ENCODE measurements at regions of chr17 and their contacts with region 1.

Region 1: DNA sequence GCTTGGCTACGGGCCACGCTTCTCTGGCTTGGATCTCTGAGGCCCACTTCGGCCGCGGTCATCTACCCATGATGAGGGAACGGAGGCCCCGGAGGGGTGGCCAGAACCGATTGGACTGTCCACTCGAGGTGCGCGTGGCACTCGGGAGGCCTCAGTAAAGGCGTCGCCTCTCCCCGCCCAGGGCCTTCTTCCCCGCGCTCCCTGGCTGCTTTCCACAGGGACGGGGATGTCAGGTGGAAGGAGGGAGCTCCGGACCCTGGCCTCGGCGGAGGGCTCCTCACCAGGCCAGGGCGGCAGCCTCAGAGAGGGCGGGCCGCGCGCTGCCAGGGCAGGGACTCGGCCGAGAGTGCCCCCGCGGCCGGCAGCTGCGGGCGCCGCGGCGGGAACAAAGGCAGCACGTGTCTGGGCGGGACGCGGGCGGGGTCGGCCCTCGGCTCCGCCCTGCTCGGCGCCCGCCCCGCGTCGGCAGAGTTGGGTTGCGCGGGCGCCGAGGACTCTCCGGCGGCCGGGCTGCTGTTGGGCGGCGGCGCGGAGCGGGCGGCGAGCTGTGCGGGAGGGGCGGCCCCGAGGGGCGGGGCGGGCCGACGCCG is 587 bp upstream of the CDK5R1 start:
- DNase-seq: peak; percentile 53 to 95 (median 89)

Region 2: GRCh38 chr17:32627239-32627996 is 141.2 kb after region 1 on chr17:
- intact Hi-C with region 1: loop called (anchors 5 kb)
- DNase-seq: peak; percentile 58 to 92 (median 80)

Region 3: DNA sequence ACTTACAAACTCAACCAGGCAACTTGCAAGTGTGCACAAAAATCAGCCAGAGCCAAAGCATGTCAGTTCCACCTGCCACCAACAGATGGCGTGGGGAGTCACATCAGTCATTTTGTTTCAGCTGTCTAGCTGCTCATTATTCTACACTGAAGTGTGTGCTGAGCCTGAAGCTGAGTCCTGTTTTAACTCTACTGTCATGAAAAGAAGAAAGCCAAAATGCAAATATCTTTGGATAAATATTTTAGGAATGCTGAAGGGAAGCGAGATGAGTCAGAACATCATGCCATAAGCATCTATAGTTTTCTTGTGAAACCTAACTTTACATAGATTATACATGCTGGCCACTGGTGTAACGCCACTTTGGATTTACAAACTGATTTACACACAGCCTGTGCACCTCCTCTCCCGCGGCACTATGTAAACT is 173.2 kb after region 1 on chr17:
- intact Hi-C with region 1: loop called (anchors 10 kb)
- DNase-seq: peak; percentile 42 to 95 (median 88)

Region 4: DNA sequence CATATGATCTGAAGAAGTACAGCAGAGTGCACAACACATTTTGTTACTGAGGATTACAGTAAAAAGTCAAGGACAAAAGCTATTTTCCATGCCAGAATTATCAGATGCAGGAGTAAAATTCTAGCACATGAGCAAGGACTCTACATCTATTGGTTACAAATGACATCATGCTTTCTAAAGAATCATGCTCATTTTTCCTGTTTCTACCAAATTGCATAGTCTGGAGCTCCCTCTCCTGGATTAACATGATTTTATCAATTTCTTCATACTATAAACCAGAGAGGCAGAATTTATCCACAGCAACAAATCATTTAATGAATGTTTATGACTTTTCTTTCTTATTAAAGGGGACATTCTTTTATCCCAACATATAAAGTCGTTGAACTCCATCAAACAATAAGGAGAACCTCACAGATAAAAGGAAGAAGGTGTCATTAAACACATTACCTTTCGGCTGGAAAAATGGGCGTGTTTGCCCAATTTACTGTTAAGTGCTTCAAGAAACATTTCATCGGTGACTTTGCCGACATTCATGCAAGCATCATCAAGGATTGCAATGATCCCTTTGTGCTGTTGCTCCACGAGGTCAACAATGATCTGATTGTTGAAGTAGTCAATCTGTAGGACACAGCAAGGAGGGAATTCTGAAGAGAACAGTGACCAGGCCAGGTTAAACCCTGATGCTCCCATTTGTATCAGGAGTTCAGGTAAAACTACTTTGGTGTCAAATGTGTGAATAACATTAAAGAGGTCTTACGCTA is 269.0 kb after region 1 on chr17:
- intact Hi-C with region 1: loop called (anchors 5 kb)
- DNase-seq: peak in 20 of 42 donors; percentile 10 to 62 (median 32)

Region 5: GRCh38 chr17:32877164-32877764 is 391.1 kb after region 1 on chr17:
- intact Hi-C with region 1: loop called (anchors 2 kb)
- DNase-seq: peak; percentile 54 to 95 (median 90)

Measured in head of caudate nucleus (tissue), 42 donors.